Motor neuron (in vitro differentiated cells): ENCODE measurements at regions of chr2 and their contacts with region 1.

Region 1: GRCh38 chr2:202158796-202159195 is 79.6 kb downstream of the SUMO1 start:
- ATAC-seq: peak in 3 of 8 experiments; percentile 42 to 66 (median 44)
- H3K4me3 ChIP-seq: no peak overlapping the region
- H3K27ac ChIP-seq: no peak overlapping the region
- H3K4me1 ChIP-seq: peaks cover 0 to 5% of the 10 kb centered on the region in 2 donors

Region 2: DNA sequence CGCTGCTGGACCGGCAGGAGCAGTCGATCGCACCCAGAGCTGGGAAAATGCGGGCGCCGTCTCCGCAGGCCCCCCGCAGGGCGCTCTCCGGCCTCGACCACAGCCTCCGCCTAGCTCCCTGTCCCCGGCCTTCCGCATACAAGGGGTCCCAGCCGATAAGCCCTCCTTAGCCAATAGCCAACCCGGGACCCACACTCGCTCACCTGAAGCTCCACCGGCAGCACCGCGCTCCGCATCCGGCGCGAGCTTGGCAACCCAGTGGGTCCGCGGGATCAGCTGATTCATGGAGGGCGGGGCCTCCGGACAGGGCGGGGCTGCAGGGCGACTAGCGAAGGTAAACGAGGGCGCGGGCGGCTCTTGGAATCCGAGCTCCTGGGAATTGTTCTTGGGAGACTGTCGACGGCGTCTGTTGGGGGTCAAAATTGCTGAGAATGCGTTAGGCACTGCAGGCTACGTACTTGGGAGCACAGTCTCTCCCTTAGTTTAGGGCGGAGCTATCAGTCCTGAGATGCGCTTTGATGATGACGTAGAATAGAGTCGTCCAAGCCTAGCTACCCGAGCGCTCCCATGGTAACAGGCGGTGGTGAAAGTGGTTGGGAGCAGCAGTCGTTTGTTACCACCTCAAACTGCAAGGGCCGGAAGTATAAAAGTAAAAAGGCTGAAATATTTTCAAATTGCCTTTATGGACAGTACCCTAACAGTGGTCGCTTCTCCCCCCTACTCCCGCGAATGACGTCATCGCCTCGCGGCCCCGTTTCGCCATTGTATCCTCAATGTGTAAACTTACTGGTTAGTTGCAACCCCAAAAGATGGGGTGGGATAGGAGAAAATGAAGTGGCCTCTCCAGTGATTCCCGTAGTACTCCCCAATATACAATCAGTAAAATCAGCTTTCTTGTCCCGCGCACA is 377.9 kb before region 1 on chr2 and contains the start of gene ALS2:
- in situ Hi-C with region 1: loop called in 3 of 9 experiments (anchors 25 kb)
- ATAC-seq: peak; percentile 88 to 93 (median 92)
- H3K4me3 ChIP-seq: peak within 1 kb of the TSS; percentile 60 to 88 (median 71)
- H3K27ac ChIP-seq: peak within 1 kb of the TSS; percentile 59 to 62
- H3K4me1 ChIP-seq: peaks cover 5 to 19% of the 10 kb centered on the region in 2 donors
- total RNA-seq, gene ALS2: 17.3 to 32.9 (median 21.8) TPM

Region 3: GRCh38 chr2:202033321-202034248 is 125.2 kb before region 1 on chr2 and contains the start of gene FZD7:
- in situ Hi-C with region 1: loop called in 2 of 9 experiments (anchors 10 to 25 kb)
- ATAC-seq: peak; percentile 66 to 78 (median 70)
- H3K4me3 ChIP-seq: peak within 1 kb of the TSS; percentile 76 to 98 (median 87)
- H3K27ac ChIP-seq: peak within 1 kb of the TSS; percentile 79 to 92
- H3K4me1 ChIP-seq: peaks cover 7 to 16% of the 10 kb centered on the region in 2 donors
- total RNA-seq, gene FZD7: 1.6 to 105 (median 28.4) TPM

Region 4: DNA sequence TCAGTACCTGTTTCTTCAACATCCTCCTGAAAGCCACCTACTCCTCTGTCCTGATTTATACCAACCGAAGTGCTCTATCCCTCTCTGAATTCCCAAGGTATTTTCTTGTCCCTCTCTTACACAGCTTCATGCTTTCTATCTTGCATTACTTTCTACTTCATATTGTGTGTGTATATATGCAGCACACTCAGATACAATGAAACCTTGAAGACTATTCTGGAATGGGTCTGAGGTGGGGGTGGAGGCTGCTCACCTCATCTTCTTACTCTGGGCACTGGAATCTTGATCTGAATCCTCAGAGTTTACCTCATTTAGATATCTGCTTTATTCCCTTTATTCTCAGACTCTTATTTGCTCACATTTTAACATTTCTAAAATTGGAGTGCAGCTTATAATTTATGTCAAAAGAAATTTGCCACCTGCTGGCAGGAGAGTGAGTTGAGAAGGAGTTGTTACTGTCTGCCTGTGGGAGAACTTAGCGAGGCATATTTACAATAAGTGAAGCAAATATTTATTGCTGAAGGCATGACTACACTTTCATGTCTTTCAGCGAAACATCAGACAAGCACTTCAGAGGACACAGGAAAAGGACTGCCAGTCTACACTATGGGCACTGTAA is 102.3 kb before region 1 on chr2:
- in situ Hi-C with region 1: no loop called
- ATAC-seq: peak in 2 of 8 experiments; percentile 25 to 53
- H3K4me3 ChIP-seq: no peak overlapping the region
- H3K27ac ChIP-seq: no peak overlapping the region
- H3K4me1 ChIP-seq: no peaks in the 10 kb centered on the region